CD8-positive, alpha-beta T cell (primary cell): ENCODE measurements at regions of chr7 and their contacts with region 1.

Region 1: DNA sequence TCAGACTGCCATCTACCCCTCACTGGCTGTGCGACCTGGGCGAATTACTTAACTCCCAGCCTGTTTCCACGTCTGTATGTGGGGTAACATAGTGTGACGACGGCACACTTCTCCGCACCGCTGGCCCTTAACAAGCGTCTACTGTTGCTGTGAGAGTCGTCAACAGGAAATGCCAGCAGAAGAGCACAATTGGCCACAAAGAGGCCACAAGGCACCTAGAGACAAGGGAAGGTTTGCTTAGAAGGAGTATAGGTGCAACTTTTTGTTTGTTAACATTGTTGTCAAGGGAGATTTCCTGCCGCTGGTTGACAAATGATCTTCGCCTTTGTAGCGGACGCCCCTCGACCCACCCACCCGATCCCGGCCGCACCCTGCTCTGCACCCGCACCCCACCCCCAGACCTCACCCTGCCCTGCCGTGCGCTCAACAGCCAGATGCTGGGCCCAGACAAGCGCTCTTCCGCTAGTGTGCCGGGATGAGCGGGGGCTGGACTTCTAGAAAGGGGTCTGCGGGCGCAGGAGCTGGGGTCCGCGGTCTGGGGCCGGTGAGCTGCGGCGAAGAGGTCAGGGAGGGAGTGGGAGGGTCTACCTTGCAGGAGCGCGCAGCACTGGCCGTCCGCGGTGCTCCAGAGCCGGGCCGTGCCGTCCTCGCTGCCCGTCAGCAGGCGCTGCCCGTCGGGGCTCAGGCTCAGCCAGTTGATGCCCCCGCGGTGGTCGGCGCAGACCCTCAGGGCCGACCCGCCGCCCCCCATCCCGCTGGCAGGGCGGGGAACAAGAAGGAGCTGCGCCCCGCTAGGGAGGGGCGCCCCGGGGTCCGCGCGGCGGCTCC is 785 bp downstream of the WDR86 start:
- DNase-seq: peak; percentile 36 to 96 (median 70)
- ATAC-seq: peak; percentile 83
- H3K4me3 ChIP-seq: peak overlapping the region; percentile 54 to 58
- H3K4me3 Mint-ChIP-seq: peak overlapping the region; percentile 76
- H3K27ac ChIP-seq: peak overlapping the region; percentile 45 to 79
- H3K27ac Mint-ChIP-seq: peak overlapping the region; percentile 91
- H3K4me1 ChIP-seq: peaks cover 23% of the 10 kb centered on the region
- H3K4me1 Mint-ChIP-seq: peaks cover 25% of the 10 kb centered on the region
- H3K27me3 ChIP-seq: peaks cover 11 to 13% of the 10 kb centered on the region in 2 experiments
- H3K27me3 Mint-ChIP-seq: peaks cover 18% of the 10 kb centered on the region
- CTCF ChIP-seq: no peak

Region 2: GRCh38 chr7:151334628-151335027 is 74.4 kb before region 1 on chr7:
- CTCF ChIA-PET with region 1: no interaction called
- POLR2A ChIA-PET with region 1: no interaction called
- intact Hi-C with region 1: no loop called
- DNase-seq: no peak
- ATAC-seq: no peak
- H3K4me3 ChIP-seq: no peak overlapping the region
- H3K4me3 Mint-ChIP-seq: no peak overlapping the region
- H3K27ac ChIP-seq: no peak overlapping the region
- H3K27ac Mint-ChIP-seq: no peak overlapping the region
- H3K4me1 ChIP-seq: no peaks in the 10 kb centered on the region
- H3K4me1 Mint-ChIP-seq: peaks cover under 1% of the 10 kb centered on the region
- H3K27me3 ChIP-seq: no peaks in the 10 kb centered on the region
- H3K27me3 Mint-ChIP-seq: no peaks in the 10 kb centered on the region
- CTCF ChIP-seq: no peak

Region 3: GRCh38 chr7:151368136-151368571 is 40.9 kb before region 1 on chr7:
- CTCF ChIA-PET with region 1: interaction called, 9 read pairs
- POLR2A ChIA-PET with region 1: no interaction called
- intact Hi-C with region 1: loop called (anchors 1 kb)
- DNase-seq: peak; percentile 56 to 86 (median 77)
- ATAC-seq: peak; percentile 97
- H3K4me3 ChIP-seq: no peak overlapping the region
- H3K4me3 Mint-ChIP-seq: no peak overlapping the region
- H3K27ac ChIP-seq: no peak overlapping the region
- H3K27ac Mint-ChIP-seq: peak overlapping the region; percentile 64
- H3K4me1 ChIP-seq: peaks cover 9% of the 10 kb centered on the region
- H3K4me1 Mint-ChIP-seq: peaks cover 18% of the 10 kb centered on the region
- H3K27me3 ChIP-seq: no peaks in the 10 kb centered on the region
- H3K27me3 Mint-ChIP-seq: no peaks in the 10 kb centered on the region
- CTCF ChIP-seq: peak; percentile 96

Region 4: DNA sequence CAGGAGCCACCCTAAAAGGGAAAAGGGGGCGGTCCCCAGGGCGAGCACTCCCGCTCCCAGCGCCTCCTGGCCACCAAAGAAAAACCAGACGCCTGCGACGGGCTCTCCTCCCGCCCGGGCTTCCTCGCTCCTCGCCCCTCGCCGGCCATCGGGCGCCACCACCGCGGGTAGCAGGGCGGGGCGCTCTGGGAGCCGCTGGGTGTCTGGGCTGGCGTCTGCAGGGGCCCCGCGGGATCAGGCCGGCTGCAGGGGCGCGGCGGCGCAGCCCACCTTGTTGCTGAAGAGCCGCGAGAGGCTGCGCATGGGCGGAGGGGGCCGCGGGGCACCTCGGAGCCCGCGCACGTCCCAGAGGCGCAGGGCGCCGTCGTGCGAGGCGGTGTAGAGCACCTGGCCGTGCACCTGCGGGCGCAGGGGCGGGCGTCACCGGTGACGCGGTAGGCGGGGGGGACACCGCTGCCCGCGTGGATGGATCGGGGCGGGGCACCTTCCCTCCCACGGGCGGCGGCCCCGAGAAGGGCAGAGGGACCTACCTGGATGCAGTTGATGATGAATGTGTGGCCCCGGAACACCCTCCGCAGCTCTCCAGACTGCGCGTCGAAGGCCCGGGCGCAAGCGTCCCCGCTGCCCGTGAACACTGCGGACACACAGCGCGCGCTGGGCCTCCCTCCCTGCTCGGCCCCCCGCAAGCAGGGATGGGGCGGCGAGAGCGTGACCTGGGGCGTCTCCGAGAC is 27.5 kb before region 1 on chr7:
- CTCF ChIA-PET with region 1: no interaction called
- POLR2A ChIA-PET with region 1: no interaction called
- intact Hi-C with region 1: loop called (anchors 1 to 2 kb)
- DNase-seq: peak; percentile 15 to 86 (median 64)
- ATAC-seq: peak; percentile 85
- H3K4me3 ChIP-seq: peak overlapping the region; percentile 40 to 54
- H3K4me3 Mint-ChIP-seq: peak overlapping the region; percentile 78
- H3K27ac ChIP-seq: peak overlapping the region in 1 of 2 experiments; percentile 22
- H3K27ac Mint-ChIP-seq: peak overlapping the region; percentile 18
- H3K4me1 ChIP-seq: peaks cover 19% of the 10 kb centered on the region
- H3K4me1 Mint-ChIP-seq: peaks cover 12% of the 10 kb centered on the region
- H3K27me3 ChIP-seq: peaks cover 6 to 7% of the 10 kb centered on the region in 2 experiments
- H3K27me3 Mint-ChIP-seq: peaks cover 7% of the 10 kb centered on the region
- CTCF ChIP-seq: no peak

Region 5: DNA sequence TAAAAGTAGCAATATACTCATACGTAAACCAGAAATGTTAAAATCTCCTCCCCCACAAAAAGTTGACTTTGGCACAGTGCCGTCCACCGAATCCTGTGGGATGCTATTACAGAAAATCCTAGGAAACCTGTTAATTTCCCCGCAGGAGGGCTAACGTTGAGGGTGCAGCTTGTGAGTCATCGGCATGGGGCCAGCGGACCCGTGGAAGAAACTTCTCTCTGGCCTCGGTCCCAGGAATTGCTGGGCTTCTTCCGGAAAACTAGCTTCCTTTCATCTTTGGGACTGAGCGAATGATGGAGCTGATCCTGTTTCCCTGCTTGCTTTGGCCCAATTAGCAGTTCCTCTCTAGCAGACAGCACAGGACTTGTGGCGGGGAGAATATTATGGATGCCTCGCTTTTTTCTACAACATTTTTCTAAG is 17.4 kb after region 1 on chr7:
- CTCF ChIA-PET with region 1: interaction called, 7 read pairs
- POLR2A ChIA-PET with region 1: interaction called, 7 read pairs
- intact Hi-C with region 1: loop called (anchors 1 kb)
- DNase-seq: no peak
- ATAC-seq: no peak
- H3K4me3 ChIP-seq: no peak overlapping the region
- H3K4me3 Mint-ChIP-seq: no peak overlapping the region
- H3K27ac ChIP-seq: no peak overlapping the region
- H3K27ac Mint-ChIP-seq: no peak overlapping the region
- H3K4me1 ChIP-seq: peaks cover 49% of the 10 kb centered on the region
- H3K4me1 Mint-ChIP-seq: peaks cover 41% of the 10 kb centered on the region
- H3K27me3 ChIP-seq: no peaks in the 10 kb centered on the region
- H3K27me3 Mint-ChIP-seq: no peaks in the 10 kb centered on the region
- CTCF ChIP-seq: no peak

Region 6: DNA sequence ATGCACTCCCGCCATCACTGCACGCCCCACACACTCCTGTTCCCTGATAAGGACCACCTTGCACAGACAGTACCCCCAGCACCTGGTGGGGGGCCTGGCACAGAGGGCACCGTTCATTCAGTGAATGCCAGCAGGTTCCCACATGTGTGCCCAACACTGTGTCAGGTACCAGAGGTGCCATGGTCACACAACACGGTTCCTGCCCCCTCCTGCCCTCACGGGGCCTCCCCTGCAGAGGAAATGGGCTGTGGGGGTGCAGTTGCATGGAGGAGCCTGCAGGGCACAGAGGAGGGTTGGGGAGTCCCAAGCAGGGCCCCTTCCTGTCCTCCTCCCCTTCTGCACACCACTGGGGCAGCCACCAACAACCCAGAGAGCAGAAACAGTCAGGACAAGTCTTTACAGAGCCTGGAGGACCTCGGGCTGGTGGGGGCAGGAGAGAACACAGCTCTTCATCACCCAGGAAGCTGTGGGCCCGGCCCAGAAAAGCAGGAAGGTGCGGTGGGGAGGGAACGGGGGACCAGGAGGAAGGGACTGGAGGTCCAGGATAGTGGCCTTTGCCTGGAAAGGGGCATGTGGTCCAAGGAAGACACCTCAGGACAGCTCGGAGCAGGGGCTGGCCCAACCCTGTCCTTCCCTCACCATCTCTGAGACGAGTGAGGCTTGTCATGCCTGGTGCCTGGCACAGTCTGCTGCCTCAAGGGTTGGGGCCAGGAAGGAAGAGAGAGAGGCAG is 23.9 kb after region 1 on chr7:
- CTCF ChIA-PET with region 1: interaction called, 7 read pairs
- POLR2A ChIA-PET with region 1: interaction called, 7 read pairs
- intact Hi-C with region 1: loop called (anchors 1 kb)
- DNase-seq: peak; percentile 23 to 81 (median 57)
- ATAC-seq: peak; percentile 58
- H3K4me3 ChIP-seq: peak overlapping the region in 1 of 2 experiments; percentile 7
- H3K4me3 Mint-ChIP-seq: peak overlapping the region; percentile 45
- H3K27ac ChIP-seq: peak overlapping the region in 1 of 2 experiments; percentile 37
- H3K27ac Mint-ChIP-seq: peak overlapping the region; percentile 62
- H3K4me1 ChIP-seq: peaks cover 54% of the 10 kb centered on the region
- H3K4me1 Mint-ChIP-seq: peaks cover 46% of the 10 kb centered on the region
- H3K27me3 ChIP-seq: no peaks in the 10 kb centered on the region
- H3K27me3 Mint-ChIP-seq: no peaks in the 10 kb centered on the region
- CTCF ChIP-seq: peak; percentile 44

Region 7: DNA sequence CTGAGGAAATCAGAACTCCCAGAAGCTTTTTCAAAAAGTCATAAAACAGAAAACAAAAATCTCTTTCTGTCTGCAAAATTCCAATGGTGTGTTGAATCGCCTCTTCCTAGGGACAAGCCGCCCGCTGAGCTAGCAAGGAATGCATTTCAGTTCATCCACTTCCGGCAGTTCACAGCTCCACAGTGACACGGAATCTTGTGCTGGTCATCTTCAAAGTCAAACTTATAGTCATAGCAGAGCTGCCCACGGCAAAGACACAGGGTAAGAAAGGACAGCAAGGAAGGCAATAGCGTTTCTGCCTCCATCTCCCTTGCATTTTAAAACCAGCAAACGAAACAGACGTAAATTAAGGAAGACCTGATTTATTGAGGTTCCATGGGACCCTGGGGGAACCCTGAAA is 727.6 kb after region 1 on chr7:
- CTCF ChIA-PET with region 1: no interaction called
- POLR2A ChIA-PET with region 1: no interaction called
- intact Hi-C with region 1: no loop called
- DNase-seq: no peak
- ATAC-seq: no peak
- H3K4me3 ChIP-seq: no peak overlapping the region
- H3K4me3 Mint-ChIP-seq: no peak overlapping the region
- H3K27ac ChIP-seq: no peak overlapping the region
- H3K27ac Mint-ChIP-seq: no peak overlapping the region
- H3K4me1 ChIP-seq: peaks cover under 1% of the 10 kb centered on the region
- H3K4me1 Mint-ChIP-seq: peaks cover 4% of the 10 kb centered on the region
- H3K27me3 ChIP-seq: no peaks in the 10 kb centered on the region
- H3K27me3 Mint-ChIP-seq: no peaks in the 10 kb centered on the region
- CTCF ChIP-seq: no peak